Caco-2 (cell line): ENCODE measurements at regions of chr12 and their contacts with region 1.

Region 1: GRCh38 chr12:14365294-14366208 is at the start of gene ATF7IP:
- DNase-seq: peak; percentile 99
- H3K4me3 ChIP-seq: peak within 1 kb of the TSS; percentile 76
- H3K4me3 Mint-ChIP-seq: peak within 1 kb of the TSS; percentile 73
- H3K27ac Mint-ChIP-seq: peak within 1 kb of the TSS; percentile 69
- H3K4me1 ChIP-seq: peaks cover 11% of the 10 kb centered on the region
- H3K4me1 Mint-ChIP-seq: peaks cover 22% of the 10 kb centered on the region
- H3K27me3 ChIP-seq: no peaks in the 10 kb centered on the region
- H3K27me3 Mint-ChIP-seq: no peaks in the 10 kb centered on the region
- CTCF ChIP-seq: peak in 1 of 2 experiments; percentile 49
- total RNA-seq, gene ATF7IP: 98.3 and 107 TPM in 2 replicates

Region 2: GRCh38 chr12:14185427-14186192 is 179.9 kb before region 1 on chr12:
- CTCF ChIA-PET with region 1: interaction called, 13 read pairs
- POLR2A ChIA-PET with region 1: interaction called, 6 read pairs
- intact Hi-C with region 1: loop called (anchors 1 kb)
- DNase-seq: peak; percentile 68 to 79
- H3K4me3 ChIP-seq: no peak overlapping the region
- H3K4me3 Mint-ChIP-seq: no peak overlapping the region
- H3K27ac Mint-ChIP-seq: no peak overlapping the region
- H3K4me1 ChIP-seq: peaks cover 4% of the 10 kb centered on the region; the same call in 1 of the 2 replicates
- H3K4me1 Mint-ChIP-seq: peaks cover 7% of the 10 kb centered on the region
- H3K27me3 ChIP-seq: no peaks in the 10 kb centered on the region; the same call in 1 of the 2 replicates
- H3K27me3 Mint-ChIP-seq: no peaks in the 10 kb centered on the region
- CTCF ChIP-seq: peak; percentile 86 to 95

Region 3: GRCh38 chr12:14239350-14239934 is 126.1 kb before region 1 on chr12:
- CTCF ChIA-PET with region 1: interaction called, 7 read pairs
- POLR2A ChIA-PET with region 1: interaction called, 4 read pairs
- intact Hi-C with region 1: loop called (anchors 5 kb)
- DNase-seq: peak; percentile 64 to 85
- H3K4me3 ChIP-seq: no peak overlapping the region
- H3K4me3 Mint-ChIP-seq: peak overlapping the region; percentile 32
- H3K27ac Mint-ChIP-seq: peak overlapping the region; percentile 43
- H3K4me1 ChIP-seq: peaks cover 18% of the 10 kb centered on the region
- H3K4me1 Mint-ChIP-seq: peaks cover 9% of the 10 kb centered on the region
- H3K27me3 ChIP-seq: no peaks in the 10 kb centered on the region
- H3K27me3 Mint-ChIP-seq: no peaks in the 10 kb centered on the region
- CTCF ChIP-seq: peak in 1 of 2 experiments; percentile 16

Region 4: GRCh38 chr12:14384783-14385638 is 19.5 kb after region 1 on chr12:
- CTCF ChIA-PET with region 1: interaction called, 18 read pairs
- POLR2A ChIA-PET with region 1: interaction called, 50 read pairs
- intact Hi-C with region 1: loop called (anchors 1 kb)
- DNase-seq: peak; percentile 89 to 90
- H3K4me3 ChIP-seq: peak overlapping the region; percentile 12
- H3K4me3 Mint-ChIP-seq: peak overlapping the region; percentile 75
- H3K27ac Mint-ChIP-seq: peak overlapping the region; percentile 84
- H3K4me1 ChIP-seq: peaks cover 19% of the 10 kb centered on the region
- H3K4me1 Mint-ChIP-seq: peaks cover 20% of the 10 kb centered on the region
- H3K27me3 ChIP-seq: no peaks in the 10 kb centered on the region
- H3K27me3 Mint-ChIP-seq: no peaks in the 10 kb centered on the region
- CTCF ChIP-seq: no peak

Region 5: GRCh38 chr12:14417715-14418114 is 52.2 kb after region 1 on chr12:
- CTCF ChIA-PET with region 1: interaction called, 4 read pairs
- POLR2A ChIA-PET with region 1: interaction called, 8 read pairs
- intact Hi-C with region 1: loop called (anchors 2 kb)
- DNase-seq: peak; percentile 76 to 85
- H3K4me3 ChIP-seq: no peak overlapping the region
- H3K4me3 Mint-ChIP-seq: peak overlapping the region; percentile 14
- H3K27ac Mint-ChIP-seq: no peak overlapping the region
- H3K4me1 ChIP-seq: peaks cover 15% of the 10 kb centered on the region; the same call in 1 of the 2 replicates
- H3K4me1 Mint-ChIP-seq: peaks cover 13% of the 10 kb centered on the region
- H3K27me3 ChIP-seq: no peaks in the 10 kb centered on the region
- H3K27me3 Mint-ChIP-seq: no peaks in the 10 kb centered on the region
- CTCF ChIP-seq: no peak

Region 6: GRCh38 chr12:14514154-14514842 is 148.7 kb after region 1 on chr12:
- CTCF ChIA-PET with region 1: interaction called, 7 read pairs
- POLR2A ChIA-PET with region 1: no interaction called
- intact Hi-C with region 1: loop called (anchors 5 kb)
- DNase-seq: peak; percentile 82 to 92
- H3K4me3 ChIP-seq: no peak overlapping the region
- H3K4me3 Mint-ChIP-seq: peak overlapping the region; percentile 47
- H3K27ac Mint-ChIP-seq: peak overlapping the region; percentile 68
- H3K4me1 ChIP-seq: peaks cover 14% of the 10 kb centered on the region
- H3K4me1 Mint-ChIP-seq: peaks cover 16% of the 10 kb centered on the region
- H3K27me3 ChIP-seq: no peaks in the 10 kb centered on the region
- H3K27me3 Mint-ChIP-seq: no peaks in the 10 kb centered on the region
- CTCF ChIP-seq: peak; percentile 71 to 87